HEK293T (cell line): ENCODE measurements at regions of chr10 and their contacts with region 1.

Region 1: DNA sequence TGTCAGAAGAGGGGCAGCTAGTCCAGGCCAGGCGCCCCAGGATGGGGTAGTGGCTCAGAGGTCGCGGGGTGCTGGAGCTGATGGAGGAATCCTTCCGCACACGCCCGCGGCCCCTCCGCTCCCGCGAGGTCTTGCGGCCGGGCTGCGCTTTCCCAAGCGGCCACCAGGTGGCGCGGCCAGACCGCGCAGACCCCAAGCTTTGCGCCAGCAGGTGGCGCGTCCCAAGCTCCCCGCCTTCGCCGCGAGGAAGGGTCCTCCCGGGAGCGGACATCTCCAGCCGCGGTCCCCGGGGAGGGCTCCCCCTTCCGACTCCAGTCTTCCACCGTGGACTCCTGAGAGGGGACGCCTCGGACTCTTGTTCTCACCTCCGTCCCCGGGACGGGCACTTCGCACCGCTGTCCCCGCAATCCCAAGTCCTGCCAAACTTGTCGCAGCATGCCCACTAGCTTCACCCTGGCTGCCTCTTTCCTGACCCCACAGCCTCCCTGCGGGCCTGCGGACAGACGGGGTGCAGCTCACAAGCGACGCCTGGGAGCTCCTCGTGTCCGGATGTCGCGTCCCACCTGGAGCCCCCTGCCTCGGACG is 19.4 kb downstream of the KCNK18 start:
- DNase-seq: peak; percentile 94

Region 2: GRCh38 chr10:117131376-117132327 is 85.1 kb before region 1 on chr10:
- CTCF ChIA-PET with region 1: no interaction called
- POLR2A ChIA-PET with region 1: no interaction called
- DNase-seq: no peak

Region 3: DNA sequence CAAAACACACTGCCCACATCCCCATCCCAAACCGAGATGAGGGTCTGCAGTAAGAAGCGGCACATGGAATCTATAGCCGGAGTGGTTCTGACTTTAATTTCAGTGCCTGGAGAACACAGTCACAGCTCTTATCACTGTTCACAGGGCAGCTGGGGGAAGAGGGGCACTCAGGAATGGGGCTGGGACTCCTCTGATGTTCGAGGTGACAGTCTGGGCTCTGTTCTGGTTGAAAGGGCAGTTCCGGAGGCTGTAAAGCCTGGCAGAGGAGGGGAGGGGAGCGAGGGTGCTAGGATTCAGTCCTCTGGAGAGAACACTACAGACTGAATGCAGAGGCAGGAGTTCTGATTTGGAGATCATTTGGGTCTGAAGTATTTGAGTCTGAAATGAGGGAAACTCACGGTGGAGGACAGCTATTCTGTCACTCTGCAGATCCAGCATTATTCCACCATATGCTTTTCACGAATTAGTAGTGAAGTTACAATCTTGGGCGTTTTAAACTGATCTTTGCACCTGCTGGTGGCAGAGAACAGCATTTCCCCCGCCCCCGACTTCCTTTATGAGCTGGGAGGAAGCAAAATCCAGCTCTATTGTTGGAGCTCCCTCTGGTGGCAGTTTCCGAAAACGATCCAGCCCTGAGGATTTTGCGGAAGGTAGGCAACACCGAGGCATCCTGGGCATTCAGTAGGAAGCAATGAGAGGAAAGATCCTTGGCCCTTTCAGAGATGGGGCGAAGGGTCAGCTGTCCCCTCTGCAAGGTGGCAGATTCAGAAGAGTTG is 42.1 kb before region 1 on chr10:
- CTCF ChIA-PET with region 1: no interaction called
- POLR2A ChIA-PET with region 1: no interaction called
- DNase-seq: peak; percentile 84

Region 4: GRCh38 chr10:117204316-117204715 is 12.4 kb before region 1 on chr10:
- CTCF ChIA-PET with region 1: interaction called, 13 read pairs
- POLR2A ChIA-PET with region 1: interaction called, 4 read pairs
- DNase-seq: no peak

Region 5: GRCh38 chr10:117226824-117227451 is 10.2 kb after region 1 on chr10:
- CTCF ChIA-PET with region 1: interaction called, 11 read pairs
- POLR2A ChIA-PET with region 1: no interaction called
- DNase-seq: peak; percentile 75

Region 6: DNA sequence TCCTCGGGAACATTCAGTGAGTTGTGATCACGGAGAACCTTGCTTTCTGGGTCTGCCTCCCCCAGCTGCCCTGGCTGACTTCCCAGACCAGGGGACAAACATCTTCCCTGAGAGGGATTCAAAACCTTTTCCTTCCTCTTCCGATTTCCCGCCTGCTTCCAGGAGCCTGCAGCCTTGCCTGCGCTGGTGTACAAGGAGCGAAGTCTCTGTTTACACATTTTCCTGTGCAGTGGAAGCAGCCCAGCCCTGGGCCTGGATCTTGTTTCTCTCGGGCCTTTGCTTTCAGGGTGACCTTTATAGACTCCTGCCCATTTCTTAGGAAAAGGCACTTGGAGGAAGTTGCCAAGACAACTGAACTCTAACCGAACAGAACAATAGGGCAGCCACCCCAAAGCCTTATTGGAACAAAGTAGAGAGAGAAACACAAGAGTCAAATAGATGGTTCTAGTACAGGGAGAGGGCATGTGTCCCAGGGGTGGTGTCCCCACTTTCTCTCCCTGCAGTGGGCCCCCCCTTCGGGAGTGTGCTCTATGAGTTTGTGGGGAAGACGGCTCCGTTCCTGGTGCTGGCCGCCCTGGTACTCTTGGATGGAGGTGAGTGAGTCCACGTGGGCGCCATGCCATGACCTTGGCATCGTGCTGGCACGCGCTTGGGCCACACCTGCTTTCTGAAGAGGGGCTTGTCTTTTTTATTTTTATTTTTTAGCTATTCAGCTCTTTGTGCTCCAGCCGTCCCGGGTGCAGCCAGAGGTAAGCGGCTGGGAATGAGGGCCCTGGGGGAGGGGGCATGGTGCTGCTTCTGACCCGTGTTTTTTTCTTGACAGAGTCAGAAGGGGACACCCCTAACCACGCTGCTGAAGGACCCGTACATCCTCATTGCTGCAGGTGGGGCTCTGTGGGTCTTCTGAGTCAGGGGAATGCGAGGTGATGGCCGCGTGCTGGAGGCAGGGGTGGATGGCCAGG is 38.4 kb after region 1 on chr10:
- CTCF ChIA-PET with region 1: no interaction called
- POLR2A ChIA-PET with region 1: no interaction called
- DNase-seq: no peak

Region 7: GRCh38 chr10:117320050-117320665 is 103.5 kb after region 1 on chr10:
- CTCF ChIA-PET with region 1: interaction called, 46 read pairs
- POLR2A ChIA-PET with region 1: interaction called, 4 read pairs
- DNase-seq: peak; percentile 39

Region 8: DNA sequence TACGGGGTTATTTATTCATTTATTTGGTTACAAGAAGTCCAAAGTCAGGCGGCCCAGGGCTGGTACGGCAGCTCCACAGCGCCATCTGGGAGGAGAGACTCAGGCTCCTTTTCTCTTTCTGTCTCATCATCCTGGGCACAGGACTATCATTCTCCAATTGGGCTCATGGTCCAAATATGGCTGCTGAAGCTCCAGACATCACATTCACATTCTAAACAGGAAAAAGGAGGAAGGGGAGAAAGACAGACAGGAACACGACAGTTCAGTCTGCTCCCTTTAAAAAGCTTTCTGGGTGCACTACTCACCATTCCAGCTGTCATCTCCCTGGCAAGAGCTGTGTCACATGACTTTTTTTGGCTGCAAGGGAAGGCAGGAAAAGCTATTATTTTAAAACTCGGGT is 232.9 kb after region 1 on chr10:
- CTCF ChIA-PET with region 1: interaction called, 12 read pairs
- POLR2A ChIA-PET with region 1: no interaction called
- DNase-seq: peak; percentile 58